ENCODE measurements at regions of chrX and their contacts with region 1.

Region 1: GRCh38 chrX:149527705-149528104 is 13.1 kb upstream of the EOLA1 start:
- DNase-seq: peak in 7 of 9 donors; percentile 27 to 62 (median 36)
- ATAC-seq: peak; percentile 43
- H3K4me3 ChIP-seq: no peak overlapping the region
- H3K4me3 Mint-ChIP-seq: peak overlapping the region in 3 of 10 donors; percentile 4 to 33 (median 10)
- H3K27ac ChIP-seq: no peak overlapping the region
- H3K27ac Mint-ChIP-seq: peak overlapping the region; percentile 35 to 88 (median 77)
- H3K4me1 ChIP-seq: peaks cover 18 to 26% of the 10 kb centered on the region in 2 donors
- H3K4me1 Mint-ChIP-seq: peaks cover 0 to 31% (median 14%) of the 10 kb centered on the region in 7 donors
- H3K27me3 ChIP-seq: no peaks in the 10 kb centered on the region
- H3K27me3 Mint-ChIP-seq: no peaks in the 10 kb centered on the region

Region 2: GRCh38 chrX:148601034-148601433 is 926.7 kb before region 1 on chrX:
- CTCF ChIA-PET with region 1: no interaction called
- POLR2A ChIA-PET with region 1: no interaction called
- intact Hi-C with region 1: no loop called
- DNase-seq: no peak
- ATAC-seq: no peak
- H3K4me3 ChIP-seq: no peak overlapping the region
- H3K4me3 Mint-ChIP-seq: no peak overlapping the region
- H3K27ac ChIP-seq: no peak overlapping the region
- H3K27ac Mint-ChIP-seq: no peak overlapping the region
- H3K4me1 ChIP-seq: no peaks in the 10 kb centered on the region
- H3K4me1 Mint-ChIP-seq: no peaks in the 10 kb centered on the region
- H3K27me3 ChIP-seq: no peaks in the 10 kb centered on the region
- H3K27me3 Mint-ChIP-seq: no peaks in the 10 kb centered on the region

Region 3: DNA sequence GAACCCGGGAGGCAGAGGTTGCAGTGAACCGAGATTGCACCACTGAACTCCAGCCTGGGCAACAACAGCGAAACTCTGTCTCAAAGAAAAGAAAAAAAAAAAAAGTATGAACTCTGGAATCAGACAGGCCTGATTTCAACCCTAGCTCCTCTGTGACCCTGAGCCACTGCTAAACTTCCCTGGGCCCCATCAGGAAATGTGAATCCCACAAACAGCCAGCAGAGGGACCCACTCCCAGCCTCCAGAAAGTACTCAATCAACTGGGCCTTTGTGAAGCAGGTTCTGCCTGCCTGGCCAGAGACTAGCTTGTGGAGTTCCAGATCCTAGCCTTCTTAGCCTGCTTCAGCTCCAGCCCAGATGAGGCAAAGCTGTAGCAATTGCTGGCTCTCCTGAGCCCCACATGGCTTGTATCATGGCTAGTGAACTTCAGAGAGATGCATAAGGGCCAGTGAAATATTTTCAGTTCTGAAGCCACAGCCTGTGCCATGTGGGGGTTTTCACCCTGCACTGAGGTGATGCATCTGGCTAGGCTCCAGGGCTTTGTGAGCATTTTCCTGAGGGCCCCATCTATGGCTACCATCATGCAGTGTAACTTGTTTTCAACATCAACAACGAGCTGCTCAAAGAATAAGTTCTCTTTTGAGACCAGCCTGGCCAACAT is 15.3 kb before region 1 on chrX:
- CTCF ChIA-PET with region 1: interaction called, 6 read pairs
- POLR2A ChIA-PET with region 1: no interaction called
- intact Hi-C with region 1: loop called (anchors 1 to 2 kb)
- DNase-seq: peak in 8 of 9 donors; percentile 34 to 56 (median 48)
- ATAC-seq: peak; percentile 88
- H3K4me3 ChIP-seq: no peak overlapping the region
- H3K4me3 Mint-ChIP-seq: peak overlapping the region in 1 of 10 donors; percentile 28
- H3K27ac ChIP-seq: no peak overlapping the region
- H3K27ac Mint-ChIP-seq: peak overlapping the region in 5 of 9 donors; percentile 17 to 71 (median 45)
- H3K4me1 ChIP-seq: peaks cover 4 to 16% of the 10 kb centered on the region in 2 donors
- H3K4me1 Mint-ChIP-seq: peaks cover 0 to 39% (median 13%) of the 10 kb centered on the region in 7 donors
- H3K27me3 ChIP-seq: no peaks in the 10 kb centered on the region
- H3K27me3 Mint-ChIP-seq: peaks cover 0 to 10% (median 0%) of the 10 kb centered on the region in 5 donors

Region 4: DNA sequence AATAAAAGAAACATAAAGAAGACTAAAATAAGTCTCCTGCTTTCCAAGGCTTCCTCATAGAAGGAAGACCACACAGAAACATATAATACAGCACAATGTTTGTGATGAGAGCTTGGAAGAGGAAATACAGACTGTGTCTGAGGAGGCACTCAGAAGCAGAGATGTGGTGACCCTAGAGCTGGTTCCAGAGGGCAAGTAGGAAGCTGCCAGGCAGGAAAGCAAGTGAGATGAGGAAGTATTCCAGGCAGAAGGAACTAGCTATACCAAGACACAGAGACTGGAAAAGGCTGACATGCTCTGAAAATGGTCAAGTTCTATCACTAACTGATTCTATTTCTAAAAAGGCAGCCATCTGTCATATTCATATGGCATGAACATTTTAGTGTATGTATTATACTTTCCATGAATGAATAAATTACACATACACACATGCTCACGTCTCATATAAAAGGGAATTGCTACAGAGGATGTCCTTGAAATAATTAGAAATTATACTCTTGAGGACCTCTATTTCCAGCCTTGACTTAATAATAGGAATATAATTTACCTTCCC is 84.0 kb after region 1 on chrX:
- CTCF ChIA-PET with region 1: no interaction called
- POLR2A ChIA-PET with region 1: no interaction called
- intact Hi-C with region 1: no loop called
- DNase-seq: no peak
- ATAC-seq: no peak
- H3K4me3 ChIP-seq: no peak overlapping the region
- H3K4me3 Mint-ChIP-seq: no peak overlapping the region
- H3K27ac ChIP-seq: no peak overlapping the region
- H3K27ac Mint-ChIP-seq: peak overlapping the region in 1 of 9 donors; percentile 16
- H3K4me1 ChIP-seq: no peaks in the 10 kb centered on the region
- H3K4me1 Mint-ChIP-seq: peaks cover 2 to 33% (median 22%) of the 10 kb centered on the region in 7 donors
- H3K27me3 ChIP-seq: no peaks in the 10 kb centered on the region
- H3K27me3 Mint-ChIP-seq: no peaks in the 10 kb centered on the region

Measured in naive thymus-derived CD4-positive, alpha-beta T cell (primary cell).